Mammary epithelial cell (primary cell): ENCODE measurements at regions of chr11 and their contacts with region 1.

Region 1: GRCh38 chr11:130213143-130213978 is 53.8 kb downstream of the ST14 start:
- DNase-seq: peak; percentile 27
- H3K4me3 ChIP-seq: no peak overlapping the region
- H3K27ac ChIP-seq: no peak overlapping the region
- H3K4me1 ChIP-seq: no peaks in the 10 kb centered on the region
- H3K27me3 ChIP-seq: no peaks in the 10 kb centered on the region
- CTCF ChIP-seq: peak; percentile 60 to 91

Region 2: DNA sequence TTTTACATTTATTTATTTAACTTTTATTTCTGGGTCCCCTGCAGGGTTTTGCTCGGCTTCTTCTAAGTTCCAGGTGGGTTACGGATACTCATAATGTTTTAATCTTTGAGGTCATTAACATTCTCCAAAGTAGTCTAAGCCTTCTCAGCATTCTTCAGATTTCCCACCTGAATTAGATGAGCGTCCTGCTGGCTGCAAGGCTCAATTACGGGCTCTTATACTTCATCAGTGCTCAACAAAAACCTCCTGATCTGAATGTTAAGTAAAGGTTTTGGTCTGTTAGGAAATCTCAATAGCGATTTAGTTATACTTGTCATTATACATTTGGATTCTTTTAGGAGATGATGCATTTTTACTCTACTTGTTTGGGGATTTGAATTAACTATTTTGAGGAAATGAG is 290.7 kb before region 1 on chr11:
- CTCF ChIA-PET with region 1: no interaction called
- dilution Hi-C with region 1: no loop called
- in situ Hi-C with region 1: no loop called
- intact Hi-C with region 1: loop called (anchors 5 kb)
- DNase-seq: no peak
- H3K4me3 ChIP-seq: no peak overlapping the region
- H3K27ac ChIP-seq: no peak overlapping the region
- H3K4me1 ChIP-seq: no peaks in the 10 kb centered on the region
- H3K27me3 ChIP-seq: no peaks in the 10 kb centered on the region
- CTCF ChIP-seq: no peak

Region 3: GRCh38 chr11:130145975-130146776 is 67.2 kb before region 1 on chr11:
- CTCF ChIA-PET with region 1: no interaction called
- dilution Hi-C with region 1: no loop called
- in situ Hi-C with region 1: no loop called
- intact Hi-C with region 1: no loop called
- DNase-seq: peak; percentile 99
- H3K4me3 ChIP-seq: no peak overlapping the region
- H3K27ac ChIP-seq: peak overlapping the region; percentile 76
- H3K4me1 ChIP-seq: peaks cover 12% of the 10 kb centered on the region
- H3K27me3 ChIP-seq: no peaks in the 10 kb centered on the region
- CTCF ChIP-seq: peak; percentile 42 to 73

Region 4: GRCh38 chr11:130269326-130269943 is 56.1 kb after region 1 on chr11:
- CTCF ChIA-PET with region 1: no interaction called
- dilution Hi-C with region 1: no loop called
- in situ Hi-C with region 1: no loop called
- intact Hi-C with region 1: no loop called
- DNase-seq: no peak
- H3K4me3 ChIP-seq: no peak overlapping the region
- H3K27ac ChIP-seq: no peak overlapping the region
- H3K4me1 ChIP-seq: no peaks in the 10 kb centered on the region
- H3K27me3 ChIP-seq: no peaks in the 10 kb centered on the region
- CTCF ChIP-seq: no peak

Region 5: GRCh38 chr11:130314750-130315285 is 101.5 kb after region 1 on chr11 and contains the start of gene ZBTB44:
- CTCF ChIA-PET with region 1: no interaction called
- dilution Hi-C with region 1: no loop called
- in situ Hi-C with region 1: no loop called
- intact Hi-C with region 1: loop called (anchors 5 kb)
- DNase-seq: peak; percentile 79
- H3K4me3 ChIP-seq: peak within 1 kb of the TSS; percentile 70 to 90 (median 81)
- H3K27ac ChIP-seq: peak within 1 kb of the TSS; percentile 46
- H3K4me1 ChIP-seq: peaks cover 29% of the 10 kb centered on the region
- H3K27me3 ChIP-seq: no peaks in the 10 kb centered on the region
- CTCF ChIP-seq: no peak
- total RNA-seq, gene ZBTB44: 27.8 to 54.3 TPM

Region 6: GRCh38 chr11:130390071-130390758 is 176.9 kb after region 1 on chr11:
- CTCF ChIA-PET with region 1: no interaction called
- dilution Hi-C with region 1: no loop called
- in situ Hi-C with region 1: no loop called
- intact Hi-C with region 1: loop called (anchors 1 kb)
- DNase-seq: peak; percentile 48
- H3K4me3 ChIP-seq: no peak overlapping the region
- H3K27ac ChIP-seq: no peak overlapping the region
- H3K4me1 ChIP-seq: no peaks in the 10 kb centered on the region
- H3K27me3 ChIP-seq: peaks cover 6% of the 10 kb centered on the region
- CTCF ChIP-seq: peak; percentile 21 to 71

Region 7: DNA sequence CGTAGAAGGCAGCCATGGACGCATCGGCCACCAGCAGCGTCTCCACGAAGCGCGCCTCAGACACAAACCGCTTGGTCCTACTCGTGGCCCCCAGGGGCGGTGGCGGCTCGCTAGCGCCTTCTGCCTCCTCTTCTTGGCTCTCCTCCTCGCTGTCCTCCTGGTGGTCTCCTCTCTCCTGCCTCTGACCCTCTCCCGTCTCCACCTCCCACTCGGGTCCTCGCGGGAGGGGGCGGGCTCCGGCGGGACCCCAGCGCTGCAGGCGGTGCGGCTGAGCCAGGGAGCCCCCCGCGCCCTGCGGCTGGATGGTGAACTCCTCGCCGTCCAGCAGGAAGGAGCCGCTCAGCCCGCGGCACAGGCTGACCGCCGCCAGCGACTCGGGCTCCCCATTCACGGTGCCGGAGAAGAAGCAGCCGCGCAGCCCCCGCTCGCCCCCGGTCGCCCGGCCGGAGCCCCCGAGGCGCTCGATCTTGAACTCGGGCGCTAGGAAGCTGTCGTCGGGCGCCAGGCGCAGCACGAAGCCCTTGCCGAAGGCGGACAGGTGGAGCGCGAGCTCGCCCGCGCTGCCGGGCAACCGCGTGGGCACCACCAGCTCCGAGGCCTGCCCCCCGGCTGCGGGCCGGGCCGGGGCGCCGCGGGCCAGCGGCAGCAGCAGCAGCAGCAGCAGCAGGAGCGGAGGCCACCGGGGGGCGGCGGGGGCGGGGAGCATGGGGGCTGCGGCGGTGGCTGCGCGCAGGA is 214.4 kb after region 1 on chr11:
- CTCF ChIA-PET with region 1: no interaction called
- dilution Hi-C with region 1: no loop called
- in situ Hi-C with region 1: loop called in 1 of 2 experiments (anchors 25 kb)
- intact Hi-C with region 1: loop called (anchors 1 kb)
- DNase-seq: no peak
- H3K4me3 ChIP-seq: peak overlapping the region in 1 of 3 experiments; percentile 14
- H3K27ac ChIP-seq: no peak overlapping the region
- H3K4me1 ChIP-seq: peaks cover 9% of the 10 kb centered on the region
- H3K27me3 ChIP-seq: peaks cover 37% of the 10 kb centered on the region
- CTCF ChIP-seq: no peak

Region 8: GRCh38 chr11:130894322-130895025 is 681.1 kb after region 1 on chr11:
- CTCF ChIA-PET with region 1: no interaction called
- dilution Hi-C with region 1: no loop called
- in situ Hi-C with region 1: loop called in 1 of 2 experiments (anchors 25 kb)
- intact Hi-C with region 1: loop called (anchors 10 kb)
- DNase-seq: peak; percentile 46
- H3K4me3 ChIP-seq: no peak overlapping the region
- H3K27ac ChIP-seq: no peak overlapping the region
- H3K4me1 ChIP-seq: peaks cover 18% of the 10 kb centered on the region
- H3K27me3 ChIP-seq: no peaks in the 10 kb centered on the region
- CTCF ChIP-seq: peak; percentile 86 to 98